ENCODE measurements at regions of chr10 and their contacts with region 1.

Region 1: GRCh38 chr10:33193057-33193700 is 141.3 kb downstream of the NRP1 start:
- DNase-seq: peak; percentile 92
- H3K4me3 ChIP-seq: no peak overlapping the region
- H3K27ac ChIP-seq: peak overlapping the region in 1 of 2 donors; percentile 14
- H3K4me1 ChIP-seq: no peaks in the 10 kb centered on the region
- H3K27me3 ChIP-seq: no peaks in the 10 kb centered on the region
- CTCF ChIP-seq: peak; percentile 60 to 79 (median 65)
- POLR2A ChIP-seq: no peak

Region 2: DNA sequence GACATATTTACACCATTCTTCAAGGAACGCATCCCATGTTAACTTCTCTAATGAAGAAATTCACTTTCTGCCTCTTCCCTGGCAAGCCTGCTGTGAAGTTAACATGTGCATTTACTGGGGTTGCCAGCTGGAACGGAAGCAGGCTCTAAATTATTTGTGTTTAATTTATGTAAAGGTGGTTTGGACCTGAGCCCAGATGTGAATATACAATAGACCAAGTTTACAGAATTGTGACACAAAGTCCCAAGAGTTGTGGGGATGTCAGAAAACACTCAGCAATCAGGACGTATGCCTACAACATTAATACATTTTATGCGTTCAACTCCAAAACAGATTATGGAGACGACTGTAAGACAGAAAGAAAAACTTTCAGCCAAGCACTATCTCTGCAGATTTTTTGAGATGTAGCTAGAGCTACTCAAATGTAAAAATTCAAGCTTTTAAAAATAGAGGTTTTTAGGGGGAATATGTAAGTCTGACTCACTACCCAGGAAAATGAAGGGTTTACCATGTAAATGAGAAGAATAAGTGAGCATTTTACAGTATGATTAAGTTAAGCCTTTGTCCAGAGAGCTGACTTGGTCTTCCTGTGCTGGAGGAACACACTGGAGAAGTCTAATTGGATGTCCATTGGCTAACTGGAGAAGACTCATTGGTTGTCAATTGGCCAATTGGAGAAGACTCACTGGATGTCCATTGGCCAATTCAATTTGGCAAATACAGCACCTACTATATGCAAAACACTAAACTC is 121.8 kb after region 1 on chr10:
- intact Hi-C with region 1: no loop called
- DNase-seq: no peak
- H3K4me3 ChIP-seq: no peak overlapping the region
- H3K27ac ChIP-seq: no peak overlapping the region
- H3K4me1 ChIP-seq: peaks cover 6% of the 10 kb centered on the region
- H3K27me3 ChIP-seq: no peaks in the 10 kb centered on the region
- CTCF ChIP-seq: no peak
- POLR2A ChIP-seq: no peak

Region 3: GRCh38 chr10:33330543-33331378 is 137.6 kb after region 1 on chr10:
- intact Hi-C with region 1: loop called (anchors 10 kb)
- DNase-seq: peak; percentile 91
- H3K4me3 ChIP-seq: peak overlapping the region in 1 of 2 donors; percentile 19
- H3K27ac ChIP-seq: peak overlapping the region; percentile 6 to 81
- H3K4me1 ChIP-seq: no peaks in the 10 kb centered on the region
- H3K27me3 ChIP-seq: no peaks in the 10 kb centered on the region
- CTCF ChIP-seq: peak; percentile 76 to 88 (median 83)
- POLR2A ChIP-seq: no peak